B cell (primary cell): ENCODE measurements at regions of chr17 and their contacts with region 1.

Region 1: DNA sequence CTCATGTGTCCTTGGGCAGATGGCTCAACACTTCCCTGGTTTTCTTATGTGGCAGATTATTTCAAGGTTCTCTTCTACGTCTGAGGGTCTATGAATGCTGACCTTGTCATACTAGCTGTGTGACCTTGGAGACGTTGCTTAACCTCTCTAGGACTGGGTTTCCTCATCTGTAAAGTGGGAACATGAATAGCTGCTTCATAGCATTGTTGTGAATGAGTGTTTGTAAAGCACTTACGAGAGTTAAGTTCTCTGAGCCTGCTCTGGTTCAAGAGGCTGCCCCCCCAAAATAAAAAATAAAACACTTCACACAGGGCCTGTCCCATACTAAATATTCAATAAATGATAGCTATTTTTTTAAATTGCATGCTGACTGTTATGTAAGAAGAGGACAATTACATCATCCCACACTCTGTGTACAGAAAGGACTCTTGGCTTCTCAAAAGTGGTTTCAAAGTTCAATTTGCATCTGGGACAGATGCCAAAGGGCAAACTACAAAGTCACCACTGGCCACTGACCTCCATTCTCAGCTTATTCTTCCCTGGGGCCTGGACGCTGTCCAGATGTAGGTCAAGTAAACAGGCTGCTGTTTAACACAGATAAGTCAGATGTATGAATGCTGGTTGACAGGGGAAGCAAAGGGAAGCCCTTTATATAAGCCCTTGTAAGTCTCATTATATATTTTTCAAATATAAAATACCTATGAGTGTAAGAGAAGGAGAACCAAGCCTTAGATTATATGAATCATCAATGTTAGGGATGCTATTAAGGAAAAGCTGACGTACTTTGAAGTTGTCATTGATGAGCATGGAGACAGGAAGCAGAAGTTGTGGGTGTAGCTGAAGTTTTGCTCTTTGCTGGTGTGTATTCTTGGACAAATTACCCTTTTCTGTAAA is 15.4 kb upstream of the NDEL1 start:
- DNase-seq: no peak
- ATAC-seq: no peak
- H3K4me3 ChIP-seq: no peak overlapping the region
- H3K4me3 Mint-ChIP-seq: no peak overlapping the region
- H3K27ac ChIP-seq: no peak overlapping the region
- H3K27ac Mint-ChIP-seq: no peak overlapping the region
- H3K4me1 ChIP-seq: no peaks in the 10 kb centered on the region
- H3K4me1 Mint-ChIP-seq: no peaks in the 10 kb centered on the region
- H3K27me3 ChIP-seq: peaks cover 0 to 17% (median 10%) of the 10 kb centered on the region in 4 experiments
- H3K27me3 Mint-ChIP-seq: peaks cover 60% of the 10 kb centered on the region
- CTCF ChIP-seq: no peak

Region 2: DNA sequence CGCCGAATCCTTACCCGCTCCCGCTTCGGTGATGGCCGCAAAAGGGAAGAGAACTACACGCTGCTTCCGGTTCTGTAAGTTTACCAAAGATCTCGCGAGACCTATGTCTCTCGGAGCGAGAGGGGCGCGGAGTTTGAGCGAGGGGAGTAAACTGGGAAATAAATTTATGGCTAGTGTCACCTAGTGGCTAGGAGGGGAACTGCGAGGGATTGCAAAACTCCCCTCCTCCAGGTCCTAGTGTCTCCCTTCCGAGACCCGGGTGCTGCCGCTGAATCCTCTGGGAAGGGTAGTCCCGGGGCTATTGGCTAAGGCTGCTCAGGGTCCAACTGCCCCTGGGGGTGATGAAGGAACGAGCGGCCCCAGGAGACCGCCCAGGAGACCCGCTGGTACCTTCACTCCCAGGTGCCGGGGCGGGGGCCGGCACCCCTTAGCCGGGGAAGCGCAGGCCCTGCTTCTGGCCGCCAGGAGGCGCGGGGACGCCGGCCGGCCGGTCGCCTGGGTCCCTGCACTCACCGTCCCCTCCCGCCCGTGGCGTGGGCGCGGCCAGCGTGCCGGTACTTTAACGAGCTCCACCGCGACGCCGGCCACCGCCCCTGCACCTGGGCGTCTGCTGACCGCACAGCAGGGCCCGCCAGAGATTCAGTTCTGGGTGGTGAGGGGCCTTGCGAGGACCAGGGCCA is 37.0 kb before region 1 on chr17 and contains the start of gene RPL26:
- CTCF ChIA-PET with region 1: no interaction called
- POLR2A ChIA-PET with region 1: no interaction called
- intact Hi-C with region 1: no loop called
- DNase-seq: peak; percentile 98
- ATAC-seq: peak; percentile 89
- H3K4me3 ChIP-seq: peak within 1 kb of the TSS; percentile 73 to 95 (median 84)
- H3K4me3 Mint-ChIP-seq: peak within 1 kb of the TSS; percentile 89
- H3K27ac ChIP-seq: peak within 1 kb of the TSS; percentile 72 to 82
- H3K27ac Mint-ChIP-seq: peak within 1 kb of the TSS; percentile 87
- H3K4me1 ChIP-seq: peaks cover 25 to 36% of the 10 kb centered on the region in 2 donors
- H3K4me1 Mint-ChIP-seq: peaks cover 50% of the 10 kb centered on the region
- H3K27me3 ChIP-seq: no peaks in the 10 kb centered on the region
- H3K27me3 Mint-ChIP-seq: no peaks in the 10 kb centered on the region
- CTCF ChIP-seq: peak; percentile 100
- total RNA-seq, gene RPL26: 2,601 and 2,684 TPM in 2 replicates

Region 3: DNA sequence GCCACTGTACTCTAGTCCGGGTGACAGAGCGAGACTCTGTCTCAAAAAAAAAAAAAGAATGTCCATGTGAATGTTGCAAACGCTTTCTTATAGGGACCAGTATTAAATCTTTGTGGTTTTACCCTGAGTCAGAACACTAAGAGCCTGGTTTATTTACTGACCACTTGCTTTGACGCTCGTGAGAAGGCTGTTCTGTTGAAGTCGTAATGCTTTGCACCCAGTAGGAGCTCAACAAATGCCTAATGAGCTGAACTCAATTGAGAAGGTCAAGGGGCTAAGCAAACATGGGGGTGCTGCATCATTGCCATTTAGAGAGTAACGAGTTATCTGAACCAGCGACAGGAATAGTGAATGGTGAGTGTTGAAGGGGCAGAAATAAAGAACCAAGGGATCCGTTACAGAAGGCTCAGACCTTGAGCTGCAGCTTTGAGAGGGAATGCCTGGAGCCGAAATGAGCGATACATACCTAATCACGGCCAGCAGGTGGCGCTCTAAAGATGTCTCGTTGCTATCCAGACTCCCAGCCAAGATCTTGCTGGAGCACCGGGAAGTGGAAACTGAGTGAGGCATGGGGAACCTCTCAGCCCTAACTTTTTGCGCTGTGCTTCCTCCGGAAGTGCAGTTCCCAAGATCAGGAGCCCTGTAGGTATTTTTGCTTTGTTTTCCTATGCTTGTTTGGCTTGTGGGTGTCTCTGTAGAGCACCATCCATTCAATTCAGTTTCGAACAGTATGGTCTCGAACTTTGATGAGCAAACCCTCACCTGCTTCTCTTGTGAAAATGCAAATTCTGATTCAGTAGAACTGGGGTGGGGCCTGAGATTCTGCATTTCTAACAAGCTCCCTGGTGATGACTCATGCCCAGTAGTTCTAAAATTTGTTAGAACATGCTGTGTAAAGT is 10.1 kb before region 1 on chr17:
- CTCF ChIA-PET with region 1: interaction called, 16 read pairs
- POLR2A ChIA-PET with region 1: no interaction called
- intact Hi-C with region 1: no loop called
- DNase-seq: peak; percentile 85
- ATAC-seq: peak; percentile 76
- H3K4me3 ChIP-seq: no peak overlapping the region
- H3K4me3 Mint-ChIP-seq: no peak overlapping the region
- H3K27ac ChIP-seq: no peak overlapping the region
- H3K27ac Mint-ChIP-seq: peak overlapping the region; percentile 50
- H3K4me1 ChIP-seq: peaks cover 0 to 5% of the 10 kb centered on the region in 2 donors
- H3K4me1 Mint-ChIP-seq: peaks cover 4% of the 10 kb centered on the region
- H3K27me3 ChIP-seq: peaks cover 0 to 19% (median 4%) of the 10 kb centered on the region in 4 experiments
- H3K27me3 Mint-ChIP-seq: peaks cover 21% of the 10 kb centered on the region
- CTCF ChIP-seq: peak; percentile 95

Region 4: GRCh38 chr17:8447799-8448198 is 27.5 kb after region 1 on chr17:
- CTCF ChIA-PET with region 1: no interaction called
- POLR2A ChIA-PET with region 1: no interaction called
- intact Hi-C with region 1: no loop called
- DNase-seq: no peak
- ATAC-seq: no peak
- H3K4me3 ChIP-seq: no peak overlapping the region
- H3K4me3 Mint-ChIP-seq: no peak overlapping the region
- H3K27ac ChIP-seq: no peak overlapping the region
- H3K27ac Mint-ChIP-seq: no peak overlapping the region
- H3K4me1 ChIP-seq: no peaks in the 10 kb centered on the region
- H3K4me1 Mint-ChIP-seq: peaks cover 13% of the 10 kb centered on the region
- H3K27me3 ChIP-seq: no peaks in the 10 kb centered on the region
- H3K27me3 Mint-ChIP-seq: no peaks in the 10 kb centered on the region
- CTCF ChIP-seq: no peak

Region 5: DNA sequence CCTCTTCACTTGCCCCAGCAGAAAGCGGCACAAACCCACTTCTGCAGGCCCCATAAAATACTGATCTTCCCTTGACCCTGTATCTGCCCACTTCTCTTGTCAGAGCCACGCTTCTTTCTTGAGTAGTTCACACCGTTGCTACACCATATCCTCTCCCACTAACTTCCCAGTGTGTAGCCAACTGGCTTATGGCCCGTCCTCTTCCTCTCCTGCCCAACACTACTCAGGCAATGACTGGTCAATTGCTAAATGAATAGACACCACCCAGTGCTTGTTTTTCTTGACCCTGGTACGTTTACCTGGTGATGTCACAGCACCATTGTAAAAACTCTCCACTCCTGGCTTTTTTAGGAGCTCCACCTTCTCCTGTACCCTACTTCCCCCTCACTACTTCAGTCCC is 102.3 kb after region 1 on chr17:
- CTCF ChIA-PET with region 1: no interaction called
- POLR2A ChIA-PET with region 1: no interaction called
- intact Hi-C with region 1: no loop called
- DNase-seq: no peak
- ATAC-seq: no peak
- H3K4me3 ChIP-seq: no peak overlapping the region
- H3K4me3 Mint-ChIP-seq: no peak overlapping the region
- H3K27ac ChIP-seq: no peak overlapping the region
- H3K27ac Mint-ChIP-seq: no peak overlapping the region
- H3K4me1 ChIP-seq: no peaks in the 10 kb centered on the region
- H3K4me1 Mint-ChIP-seq: no peaks in the 10 kb centered on the region
- H3K27me3 ChIP-seq: no peaks in the 10 kb centered on the region
- H3K27me3 Mint-ChIP-seq: no peaks in the 10 kb centered on the region
- CTCF ChIP-seq: no peak